Caco-2 (cell line): ENCODE measurements at regions of chr3 and their contacts with region 1.

Region 1: GRCh38 chr3:192850451-192850981 is 67.1 kb downstream of the MB21D2 start:
- DNase-seq: peak; percentile 85 to 94
- H3K4me3 ChIP-seq: peak overlapping the region; percentile 6; the same call in 1 of the 2 replicates
- H3K4me3 Mint-ChIP-seq: peak overlapping the region; percentile 68
- H3K27ac Mint-ChIP-seq: peak overlapping the region; percentile 94
- H3K4me1 ChIP-seq: peaks cover 50% of the 10 kb centered on the region
- H3K4me1 Mint-ChIP-seq: peaks cover 40% of the 10 kb centered on the region
- H3K27me3 ChIP-seq: no peaks in the 10 kb centered on the region
- H3K27me3 Mint-ChIP-seq: no peaks in the 10 kb centered on the region
- CTCF ChIP-seq: no peak

Region 2: DNA sequence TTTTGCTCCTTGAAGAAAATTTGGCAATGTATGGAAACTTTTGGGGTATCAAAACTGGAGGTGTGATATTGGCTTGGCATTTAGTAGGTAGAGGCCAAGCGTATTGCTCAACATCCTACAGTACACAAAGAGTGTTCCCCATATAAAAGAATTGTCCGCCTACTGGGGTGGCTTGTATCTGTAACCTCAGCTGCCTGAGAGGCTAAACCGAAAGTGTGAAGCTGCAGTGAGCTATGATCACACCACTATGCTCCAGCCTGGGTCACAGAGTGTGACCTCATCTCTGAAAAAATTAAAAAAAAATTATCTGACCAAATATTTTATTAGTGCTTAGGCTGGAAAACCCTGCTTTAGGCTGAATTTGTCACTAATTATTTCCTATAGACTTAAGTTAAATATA is 905.7 kb before region 1 on chr3:
- CTCF ChIA-PET with region 1: no interaction called
- POLR2A ChIA-PET with region 1: no interaction called
- intact Hi-C with region 1: no loop called
- DNase-seq: no peak
- H3K4me3 ChIP-seq: no peak overlapping the region
- H3K4me3 Mint-ChIP-seq: no peak overlapping the region
- H3K27ac Mint-ChIP-seq: no peak overlapping the region
- H3K4me1 ChIP-seq: no peaks in the 10 kb centered on the region
- H3K4me1 Mint-ChIP-seq: no peaks in the 10 kb centered on the region
- H3K27me3 ChIP-seq: no peaks in the 10 kb centered on the region
- H3K27me3 Mint-ChIP-seq: no peaks in the 10 kb centered on the region
- CTCF ChIP-seq: no peak

Region 3: GRCh38 chr3:192879336-192880106 is 29.0 kb after region 1 on chr3:
- CTCF ChIA-PET with region 1: no interaction called
- POLR2A ChIA-PET with region 1: interaction called, 3 read pairs
- intact Hi-C with region 1: loop called (anchors 1 kb)
- DNase-seq: peak; percentile 82 to 87
- H3K4me3 ChIP-seq: no peak overlapping the region
- H3K4me3 Mint-ChIP-seq: peak overlapping the region; percentile 66
- H3K27ac Mint-ChIP-seq: no peak overlapping the region
- H3K4me1 ChIP-seq: peaks cover 38% of the 10 kb centered on the region
- H3K4me1 Mint-ChIP-seq: peaks cover 43% of the 10 kb centered on the region
- H3K27me3 ChIP-seq: no peaks in the 10 kb centered on the region
- H3K27me3 Mint-ChIP-seq: no peaks in the 10 kb centered on the region
- CTCF ChIP-seq: no peak

Region 4: DNA sequence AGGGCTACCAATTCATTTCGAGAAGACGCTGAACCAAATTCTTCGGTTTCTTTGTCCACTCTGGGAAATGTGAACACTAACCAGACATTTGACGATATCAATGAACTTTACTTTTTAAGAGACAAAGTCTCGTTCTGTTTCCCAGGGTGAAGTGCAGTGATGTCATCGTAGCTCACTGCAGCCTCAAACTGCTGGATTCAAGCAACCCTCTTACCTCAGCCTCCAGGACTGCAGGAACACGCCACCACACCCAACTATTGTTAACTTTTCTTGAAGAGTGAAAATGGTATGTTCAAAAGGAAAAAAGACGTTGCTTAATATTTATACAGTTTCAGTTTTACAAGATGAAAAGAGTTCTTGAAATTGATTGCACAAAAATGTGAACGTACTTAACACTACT is 36.5 kb after region 1 on chr3:
- CTCF ChIA-PET with region 1: no interaction called
- POLR2A ChIA-PET with region 1: no interaction called
- intact Hi-C with region 1: loop called (anchors 1 kb)
- DNase-seq: peak; percentile 36 to 61
- H3K4me3 ChIP-seq: peak overlapping the region; percentile 11; the same call in 1 of the 2 replicates
- H3K4me3 Mint-ChIP-seq: peak overlapping the region; percentile 77
- H3K27ac Mint-ChIP-seq: peak overlapping the region; percentile 89
- H3K4me1 ChIP-seq: peaks cover 77% of the 10 kb centered on the region
- H3K4me1 Mint-ChIP-seq: peaks cover 47% of the 10 kb centered on the region
- H3K27me3 ChIP-seq: no peaks in the 10 kb centered on the region
- H3K27me3 Mint-ChIP-seq: no peaks in the 10 kb centered on the region
- CTCF ChIP-seq: no peak